ENCODE measurements at regions of chr15 and their contacts with region 1.

Region 1: GRCh38 chr15:66946578-66947164 is 118.7 kb upstream of the SMAD3 start:
- DNase-seq: peak; percentile 78
- ATAC-seq: peak; percentile 86

Region 2: GRCh38 chr15:67303490-67304363 is 357.1 kb after region 1 on chr15:
- intact Hi-C with region 1: loop called (anchors 2 kb)
- DNase-seq: no peak
- ATAC-seq: no peak

Region 3: DNA sequence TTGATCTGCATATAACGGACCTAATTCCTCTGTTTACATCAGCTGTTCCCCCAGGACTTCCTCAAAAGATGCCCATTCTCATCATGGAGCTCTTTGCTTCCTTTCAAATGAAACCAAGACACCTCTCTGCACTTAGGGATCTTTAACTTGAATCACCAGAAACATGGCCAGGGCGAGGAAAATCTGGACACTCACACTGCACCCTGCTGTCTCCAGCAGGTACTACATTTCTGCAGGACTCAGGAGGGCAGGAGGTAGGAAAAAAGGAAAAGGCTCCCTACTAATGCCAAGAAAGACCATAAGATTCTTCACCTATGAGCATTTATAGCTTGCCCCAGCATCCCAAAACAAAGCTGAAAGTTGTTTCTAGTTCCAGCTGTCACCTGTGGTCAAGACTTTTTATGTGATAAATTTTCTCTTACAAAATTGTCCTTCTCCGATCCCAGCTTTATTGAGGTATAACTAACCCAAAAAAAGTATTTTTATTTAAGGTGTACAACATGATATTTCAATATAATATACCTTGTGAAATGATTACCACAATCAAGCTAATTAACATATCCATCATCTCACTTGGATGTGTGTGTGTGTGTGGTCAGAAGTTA is 486.9 kb after region 1 on chr15:
- intact Hi-C with region 1: loop called (anchors 5 kb)
- DNase-seq: no peak
- ATAC-seq: peak; percentile 60